Adrenal gland (tissue), 19 donors: ENCODE measurements at regions of chr15 and their contacts with region 1.

Region 1: GRCh38 chr15:55649054-55649423 is 60.9 kb upstream of the PYGO1 start:
- DNase-seq: no peak
- H3K4me3 ChIP-seq: no peak overlapping the region
- H3K27ac ChIP-seq: no peak overlapping the region
- H3K4me1 ChIP-seq: no peaks in the 10 kb centered on the region
- H3K27me3 ChIP-seq: no peaks in the 10 kb centered on the region
- CTCF ChIP-seq: no peak
- POLR2A ChIP-seq: no peak

Region 2: DNA sequence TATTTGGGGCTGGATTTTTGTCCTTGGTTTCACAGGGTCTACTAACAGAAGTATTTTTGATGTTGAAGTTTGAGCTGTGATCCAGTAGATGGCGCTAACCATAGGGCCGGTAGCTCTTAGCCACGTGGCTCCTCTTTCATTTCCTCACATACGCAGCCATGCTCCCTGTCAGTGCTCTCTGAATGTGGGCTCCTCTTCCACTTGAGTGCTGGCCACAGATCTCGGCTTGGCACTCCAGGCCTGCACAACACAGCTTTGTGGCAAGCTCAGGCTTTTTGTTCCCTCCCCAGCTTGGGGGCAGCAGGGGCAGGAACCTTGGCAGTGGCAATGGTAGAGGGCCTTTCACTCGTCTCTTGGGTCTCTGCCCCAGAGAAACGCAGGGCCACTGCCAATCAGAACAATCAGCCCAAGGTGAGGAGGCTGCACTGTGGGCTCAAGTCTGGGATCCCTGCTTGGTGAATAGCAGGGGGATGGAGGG is 122.4 kb before region 1 on chr15:
- intact Hi-C with region 1: loop called (anchors 5 kb)
- DNase-seq: peak in 6 of 7 donors; percentile 31 to 61 (median 47)
- H3K4me3 ChIP-seq: peak overlapping the region in 1 of 4 donors; percentile 13
- H3K27ac ChIP-seq: no peak overlapping the region
- H3K4me1 ChIP-seq: no peaks in the 10 kb centered on the region
- H3K27me3 ChIP-seq: no peaks in the 10 kb centered on the region
- CTCF ChIP-seq: peak; percentile 47 to 72 (median 64)
- POLR2A ChIP-seq: no peak

Region 3: GRCh38 chr15:55574096-55574495 is 74.9 kb before region 1 on chr15:
- intact Hi-C with region 1: no loop called
- DNase-seq: no peak
- H3K4me3 ChIP-seq: no peak overlapping the region
- H3K27ac ChIP-seq: no peak overlapping the region
- H3K4me1 ChIP-seq: no peaks in the 10 kb centered on the region
- H3K27me3 ChIP-seq: no peaks in the 10 kb centered on the region
- CTCF ChIP-seq: no peak
- POLR2A ChIP-seq: no peak

Region 4: GRCh38 chr15:55799291-55800212 is 150.5 kb after region 1 on chr15:
- intact Hi-C with region 1: loop called (anchors 5 kb)
- DNase-seq: peak; percentile 20 to 81 (median 48)
- H3K4me3 ChIP-seq: no peak overlapping the region
- H3K27ac ChIP-seq: no peak overlapping the region
- H3K4me1 ChIP-seq: no peaks in the 10 kb centered on the region
- H3K27me3 ChIP-seq: no peaks in the 10 kb centered on the region
- CTCF ChIP-seq: peak; percentile 35 to 64 (median 54)
- POLR2A ChIP-seq: no peak